ENCODE measurements at regions of chr21 and their contacts with region 1.

Region 1: GRCh38 chr21:42496122-42496900 is at the start of gene RSPH1:
- DNase-seq: peak; percentile 99 to 100 (median 99)
- ATAC-seq: peak; percentile 96
- H3K4me3 ChIP-seq: peak within 1 kb of the TSS; percentile 70 to 78
- H3K4me3 Mint-ChIP-seq: peak within 1 kb of the TSS; percentile 88
- H3K27ac ChIP-seq: peak within 1 kb of the TSS; percentile 78 to 81
- H3K27ac Mint-ChIP-seq: peak within 1 kb of the TSS; percentile 79
- H3K4me1 ChIP-seq: peaks cover 12% of the 10 kb centered on the region
- H3K4me1 Mint-ChIP-seq: peaks cover 11% of the 10 kb centered on the region
- H3K27me3 ChIP-seq: no peaks in the 10 kb centered on the region
- H3K27me3 Mint-ChIP-seq: no peaks in the 10 kb centered on the region
- CTCF ChIP-seq: no peak
- total RNA-seq, gene RSPH1: 0.16 TPM in 1 of 2 experiments, not detected in the other

Region 2: DNA sequence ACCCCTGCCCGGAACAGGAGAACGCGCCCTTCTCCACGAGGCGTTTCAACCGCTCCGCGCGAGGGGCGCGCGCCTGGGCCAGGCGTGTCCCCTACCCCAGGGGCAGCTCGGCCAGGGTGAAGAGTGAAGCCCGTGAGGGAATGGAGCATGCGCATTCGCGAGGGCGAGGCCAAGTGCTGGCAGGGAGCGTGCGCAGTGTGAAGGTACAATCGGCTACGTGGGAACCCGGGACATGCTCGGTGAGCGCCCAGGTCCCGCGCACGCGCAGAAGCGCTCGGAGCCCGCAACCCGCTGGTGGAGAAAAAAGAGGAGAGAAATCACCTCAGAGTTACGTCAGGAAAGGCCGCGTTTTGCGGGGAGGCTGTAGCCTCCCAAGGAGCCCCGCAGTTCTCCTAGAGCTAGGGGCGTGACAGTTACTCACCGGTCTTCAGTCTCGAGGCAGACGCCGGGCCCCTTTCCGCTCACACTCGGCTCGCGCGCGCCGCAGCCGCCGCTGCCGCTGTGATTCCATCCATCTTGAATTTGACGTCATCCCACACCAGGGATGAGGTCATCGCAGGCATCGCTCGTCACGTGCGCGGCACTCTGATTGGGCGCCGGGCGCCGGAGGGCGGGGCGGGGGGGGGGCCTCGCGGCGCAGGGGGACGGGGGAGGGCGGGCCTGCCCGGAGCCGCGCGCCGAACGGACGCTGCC is 486.3 kb before region 1 on chr21 and contains the start of gene ZBTB21:
- CTCF ChIA-PET with region 1: no interaction called
- POLR2A ChIA-PET with region 1: no interaction called
- intact Hi-C with region 1: loop called in 1 of 2 experiments (anchors 1 kb)
- DNase-seq: peak; percentile 95 to 99 (median 98)
- ATAC-seq: peak; percentile 75
- H3K4me3 ChIP-seq: peak within 1 kb of the TSS; percentile 64 to 95
- H3K4me3 Mint-ChIP-seq: peak within 1 kb of the TSS; percentile 98
- H3K27ac ChIP-seq: peak within 1 kb of the TSS; percentile 96 to 100
- H3K27ac Mint-ChIP-seq: peak within 1 kb of the TSS; percentile 100
- H3K4me1 ChIP-seq: peaks cover 5% of the 10 kb centered on the region
- H3K4me1 Mint-ChIP-seq: peaks cover 38% of the 10 kb centered on the region
- H3K27me3 ChIP-seq: no peaks in the 10 kb centered on the region
- H3K27me3 Mint-ChIP-seq: no peaks in the 10 kb centered on the region
- CTCF ChIP-seq: no peak
- total RNA-seq, gene ZBTB21: 130 to 141 TPM

Region 3: GRCh38 chr21:42449296-42449927 is 46.9 kb before region 1 on chr21:
- CTCF ChIA-PET with region 1: no interaction called
- POLR2A ChIA-PET with region 1: no interaction called
- intact Hi-C with region 1: loop called in 1 of 2 experiments (anchors 2 kb)
- DNase-seq: no peak
- ATAC-seq: no peak
- H3K4me3 ChIP-seq: no peak overlapping the region
- H3K4me3 Mint-ChIP-seq: no peak overlapping the region
- H3K27ac ChIP-seq: peak overlapping the region; percentile 0 to 5
- H3K27ac Mint-ChIP-seq: peak overlapping the region; percentile 98
- H3K4me1 ChIP-seq: peaks cover 15% of the 10 kb centered on the region
- H3K4me1 Mint-ChIP-seq: peaks cover 24% of the 10 kb centered on the region
- H3K27me3 ChIP-seq: no peaks in the 10 kb centered on the region
- H3K27me3 Mint-ChIP-seq: no peaks in the 10 kb centered on the region
- CTCF ChIP-seq: no peak

Region 4: GRCh38 chr21:42513985-42514882 is 17.9 kb after region 1 on chr21:
- CTCF ChIA-PET with region 1: interaction called, 3 read pairs
- POLR2A ChIA-PET with region 1: interaction called, 8 read pairs
- intact Hi-C with region 1: loop called (anchors 1 kb)
- DNase-seq: peak in 8 of 9 experiments; percentile 35 to 78 (median 66)
- ATAC-seq: peak; percentile 85
- H3K4me3 ChIP-seq: peak overlapping the region; percentile 75 to 78
- H3K4me3 Mint-ChIP-seq: peak overlapping the region; percentile 80
- H3K27ac ChIP-seq: peak overlapping the region; percentile 64 to 76
- H3K27ac Mint-ChIP-seq: peak overlapping the region; percentile 82
- H3K4me1 ChIP-seq: peaks cover 18% of the 10 kb centered on the region
- H3K4me1 Mint-ChIP-seq: peaks cover 42% of the 10 kb centered on the region
- H3K27me3 ChIP-seq: no peaks in the 10 kb centered on the region
- H3K27me3 Mint-ChIP-seq: no peaks in the 10 kb centered on the region
- CTCF ChIP-seq: no peak

Region 5: GRCh38 chr21:42892931-42893755 is 396.8 kb after region 1 on chr21 and contains the start of gene NDUFV3:
- CTCF ChIA-PET with region 1: no interaction called
- POLR2A ChIA-PET with region 1: no interaction called
- intact Hi-C with region 1: loop called in 1 of 2 experiments (anchors 1 kb)
- DNase-seq: peak; percentile 100
- ATAC-seq: peak; percentile 96
- H3K4me3 ChIP-seq: peak within 1 kb of the TSS; percentile 70 to 94
- H3K4me3 Mint-ChIP-seq: peak within 1 kb of the TSS; percentile 85
- H3K27ac ChIP-seq: peak within 1 kb of the TSS; percentile 92 to 93
- H3K27ac Mint-ChIP-seq: peak within 1 kb of the TSS; percentile 98
- H3K4me1 ChIP-seq: peaks cover 14% of the 10 kb centered on the region
- H3K4me1 Mint-ChIP-seq: peaks cover 23% of the 10 kb centered on the region
- H3K27me3 ChIP-seq: no peaks in the 10 kb centered on the region
- H3K27me3 Mint-ChIP-seq: no peaks in the 10 kb centered on the region
- CTCF ChIP-seq: no peak
- total RNA-seq, gene NDUFV3: 18.0 to 18.2 TPM

Measured in CD8-positive, alpha-beta T cell (primary cell).